ENCODE measurements at regions of chr17 and their contacts with region 1.

Region 1: DNA sequence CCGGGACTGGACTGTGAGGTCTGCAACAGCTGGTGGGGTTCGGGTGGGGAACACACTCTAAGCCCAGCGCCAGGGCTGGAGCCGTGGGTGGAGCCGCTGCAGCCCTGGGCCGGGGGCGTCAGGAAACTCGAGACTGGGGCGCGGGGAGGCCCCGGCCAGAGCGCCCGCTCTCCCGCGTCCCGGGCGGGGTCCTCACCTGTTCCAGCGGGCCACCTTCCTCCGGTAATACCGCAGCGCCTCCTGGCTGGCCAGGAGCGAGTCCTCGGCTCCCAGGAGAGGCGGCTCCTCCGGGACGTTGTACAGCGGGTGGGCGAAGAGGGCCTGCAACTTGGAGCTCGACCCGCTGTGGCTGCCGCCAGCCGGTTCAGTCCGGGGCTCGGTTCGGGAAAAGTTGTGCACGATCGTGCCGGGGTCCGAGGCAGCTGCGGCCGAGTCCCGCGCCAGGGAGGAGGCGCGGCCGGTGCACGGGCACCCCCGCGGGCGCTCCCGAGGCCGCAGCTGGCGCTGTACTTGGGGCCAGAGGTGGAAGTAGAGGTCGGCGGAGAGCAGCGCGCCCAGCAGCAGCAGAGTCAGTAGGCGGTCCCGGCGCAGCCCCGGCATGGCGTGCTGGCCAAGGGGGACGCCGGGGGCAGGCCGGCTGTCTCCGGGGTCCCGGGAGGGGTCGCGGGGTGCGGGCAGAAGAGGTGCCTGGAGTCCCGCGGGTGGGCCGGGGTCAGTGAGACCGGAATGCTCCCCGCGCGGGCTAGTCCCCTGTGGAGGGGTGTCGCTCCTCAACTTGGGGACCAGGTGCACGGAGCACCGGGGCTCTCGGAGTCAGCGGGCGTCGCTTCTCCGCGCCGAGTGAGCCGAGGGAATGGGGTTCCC is 868 bp downstream of the FAM20A start:
- DNase-seq: peak; percentile 49 to 66
- H3K4me3 ChIP-seq: peak overlapping the region; percentile 45
- H3K4me3 Mint-ChIP-seq: peak overlapping the region; percentile 61
- H3K27ac Mint-ChIP-seq: peak overlapping the region; percentile 63
- H3K4me1 ChIP-seq: peaks cover 15% of the 10 kb centered on the region
- H3K4me1 Mint-ChIP-seq: peaks cover 15% of the 10 kb centered on the region
- H3K27me3 ChIP-seq: no peaks in the 10 kb centered on the region
- H3K27me3 Mint-ChIP-seq: peaks cover 9% of the 10 kb centered on the region
- CTCF ChIP-seq: peak; percentile 27 to 61

Region 2: GRCh38 chr17:68314916-68315535 is 285.3 kb before region 1 on chr17:
- CTCF ChIA-PET with region 1: no interaction called
- POLR2A ChIA-PET with region 1: no interaction called
- intact Hi-C with region 1: no loop called
- DNase-seq: no peak
- H3K4me3 ChIP-seq: no peak overlapping the region
- H3K4me3 Mint-ChIP-seq: no peak overlapping the region
- H3K27ac Mint-ChIP-seq: no peak overlapping the region
- H3K4me1 ChIP-seq: no peaks in the 10 kb centered on the region
- H3K4me1 Mint-ChIP-seq: peaks cover 11% of the 10 kb centered on the region
- H3K27me3 ChIP-seq: no peaks in the 10 kb centered on the region
- H3K27me3 Mint-ChIP-seq: no peaks in the 10 kb centered on the region
- CTCF ChIP-seq: no peak

Region 3: DNA sequence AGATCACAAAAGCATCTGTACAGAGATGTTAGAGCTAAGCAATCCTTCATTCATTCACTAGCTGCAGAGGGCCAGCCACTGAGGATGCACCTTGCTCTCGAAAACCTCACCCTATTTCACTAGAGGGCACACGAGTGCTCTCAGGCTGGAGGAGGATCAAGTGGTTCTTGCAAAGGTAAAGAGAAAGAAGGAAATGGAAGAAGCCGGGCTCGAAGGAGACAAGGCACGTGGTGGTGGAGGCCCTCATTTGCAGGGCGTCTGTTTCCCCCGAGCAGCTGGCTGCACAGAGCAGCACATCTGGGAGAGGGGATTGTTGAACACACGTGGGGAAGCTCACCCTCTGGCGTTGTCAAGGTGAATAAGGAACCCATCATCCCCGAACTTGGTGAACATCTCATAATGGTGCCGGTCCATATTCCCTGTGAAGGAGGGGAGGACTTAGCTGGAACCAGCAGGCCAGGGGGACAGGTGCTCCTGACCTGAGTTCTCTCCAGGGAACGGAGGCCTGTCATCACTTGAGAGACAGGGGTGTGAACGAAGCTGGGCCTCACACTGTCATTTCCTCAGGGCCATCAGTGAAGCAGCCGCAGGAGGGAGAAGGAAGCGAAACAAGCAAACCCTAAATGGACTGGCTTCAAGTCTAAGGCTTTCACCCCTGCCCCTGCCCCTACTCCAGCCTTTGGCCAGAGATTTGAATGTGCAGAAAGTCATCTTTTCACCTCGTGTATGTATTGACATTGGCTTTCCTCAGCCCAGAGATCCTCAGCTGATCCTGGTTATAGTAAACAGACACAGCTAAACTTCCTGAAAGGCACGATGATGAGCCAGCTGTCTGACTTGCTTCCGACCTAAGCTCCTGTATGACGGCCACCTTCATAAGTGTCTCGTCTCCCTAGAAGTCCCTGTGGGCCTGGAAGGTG is 60.5 kb before region 1 on chr17:
- CTCF ChIA-PET with region 1: no interaction called
- POLR2A ChIA-PET with region 1: no interaction called
- intact Hi-C with region 1: loop called (anchors 2 kb)
- DNase-seq: peak in 1 of 2 experiments; percentile 14
- H3K4me3 ChIP-seq: no peak overlapping the region
- H3K4me3 Mint-ChIP-seq: no peak overlapping the region
- H3K27ac Mint-ChIP-seq: no peak overlapping the region
- H3K4me1 ChIP-seq: no peaks in the 10 kb centered on the region
- H3K4me1 Mint-ChIP-seq: peaks cover 6% of the 10 kb centered on the region
- H3K27me3 ChIP-seq: no peaks in the 10 kb centered on the region
- H3K27me3 Mint-ChIP-seq: no peaks in the 10 kb centered on the region
- CTCF ChIP-seq: peak in 1 of 2 experiments; percentile 37

Region 4: GRCh38 chr17:68567035-68567434 is 33.3 kb before region 1 on chr17:
- CTCF ChIA-PET with region 1: interaction called, 3 read pairs
- POLR2A ChIA-PET with region 1: no interaction called
- intact Hi-C with region 1: loop called (anchors 1 kb)
- DNase-seq: peak; percentile 50 to 64
- H3K4me3 ChIP-seq: no peak overlapping the region
- H3K4me3 Mint-ChIP-seq: peak overlapping the region; percentile 13
- H3K27ac Mint-ChIP-seq: peak overlapping the region; percentile 74
- H3K4me1 ChIP-seq: peaks cover 18% of the 10 kb centered on the region
- H3K4me1 Mint-ChIP-seq: peaks cover 43% of the 10 kb centered on the region
- H3K27me3 ChIP-seq: no peaks in the 10 kb centered on the region
- H3K27me3 Mint-ChIP-seq: no peaks in the 10 kb centered on the region
- CTCF ChIP-seq: no peak

Region 5: DNA sequence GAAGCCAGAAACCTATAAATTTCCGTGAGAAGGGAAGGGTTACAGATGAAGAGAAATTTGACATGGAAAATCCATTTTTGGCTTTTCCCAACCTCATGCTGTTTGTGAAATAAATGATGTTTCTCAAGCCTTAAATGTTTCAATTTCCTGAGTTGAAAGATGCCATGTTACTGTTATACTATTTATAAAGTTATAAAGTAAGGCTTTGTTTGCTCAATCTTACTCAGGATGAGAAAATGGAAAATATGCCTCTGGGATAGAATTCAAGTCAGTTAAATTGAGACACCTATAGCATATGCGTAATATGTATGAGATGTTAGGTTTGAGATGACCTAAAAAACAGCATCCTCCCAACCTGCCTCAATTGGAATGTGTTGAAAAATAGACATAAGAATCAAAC is 20.8 kb after region 1 on chr17:
- CTCF ChIA-PET with region 1: no interaction called
- POLR2A ChIA-PET with region 1: no interaction called
- intact Hi-C with region 1: no loop called
- DNase-seq: no peak
- H3K4me3 ChIP-seq: no peak overlapping the region
- H3K4me3 Mint-ChIP-seq: no peak overlapping the region
- H3K27ac Mint-ChIP-seq: no peak overlapping the region
- H3K4me1 ChIP-seq: no peaks in the 10 kb centered on the region
- H3K4me1 Mint-ChIP-seq: no peaks in the 10 kb centered on the region
- H3K27me3 ChIP-seq: no peaks in the 10 kb centered on the region; the same call in 1 of the 2 replicates
- H3K27me3 Mint-ChIP-seq: peaks cover 14% of the 10 kb centered on the region
- CTCF ChIP-seq: no peak